HepG2 (cell line): ENCODE measurements at regions of chr2 and their contacts with region 1.

Region 1: DNA sequence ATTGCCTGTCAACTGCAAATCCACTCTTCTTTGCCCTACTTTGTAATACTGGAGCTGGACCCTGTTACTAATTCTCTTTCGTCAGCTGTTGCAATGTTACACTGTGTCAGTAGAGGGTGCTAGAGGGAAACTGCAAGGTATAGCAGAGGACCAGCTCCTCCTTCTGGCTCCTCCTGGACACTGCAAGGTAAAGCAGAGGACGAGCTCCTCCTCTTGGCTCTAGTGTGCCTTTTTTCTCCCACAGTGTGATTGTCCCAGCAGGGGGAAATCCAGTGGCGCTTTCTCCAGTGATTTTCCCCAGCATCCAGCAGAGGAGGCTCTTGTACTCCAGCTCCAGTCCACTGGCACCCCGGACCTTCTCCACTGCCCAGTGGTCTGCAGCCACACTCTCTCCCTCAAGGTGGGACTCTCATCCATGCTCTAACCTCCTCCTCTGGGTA is 95.6 kb downstream of the CAPN13 start:
- DNase-seq: peak; percentile 94
- ATAC-seq: peak; percentile 89
- H3K4me3 ChIP-seq: no peak overlapping the region
- H3K27ac ChIP-seq: no peak overlapping the region
- H3K4me1 ChIP-seq: no peaks in the 10 kb centered on the region
- H3K27me3 ChIP-seq: peaks cover 0 to 6% of the 10 kb centered on the region in 2 experiments; a peak in 1 of 5 replicates
- CTCF ChIP-seq: peak; percentile 99
- EP300 ChIP-seq: 0 out of 4 replicates have a peak, but pooled peaks of 1 of the 2 experiments have one; percentile 12
- POLR2A ChIP-seq: no peak
- RAD21 ChIP-seq: peak; percentile 94

Region 2: DNA sequence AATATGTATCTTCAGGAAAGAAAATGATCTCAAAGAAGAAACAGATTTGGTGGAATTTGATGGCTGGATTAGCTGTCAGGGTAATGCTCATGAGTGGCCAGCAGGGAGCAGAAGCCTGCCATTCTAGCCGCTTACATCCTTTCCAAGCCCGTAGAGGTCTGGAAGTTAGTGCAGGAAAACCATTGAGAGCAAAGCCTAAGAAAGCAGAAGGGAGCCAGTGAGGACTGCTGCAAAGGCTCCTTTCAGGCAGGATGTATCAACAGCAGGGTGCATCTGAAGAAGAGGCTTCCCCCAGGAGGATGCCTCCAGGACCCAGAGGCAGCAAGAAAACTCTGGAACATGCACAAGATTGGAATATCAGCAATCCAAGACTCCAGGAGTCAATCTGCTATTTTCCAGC is 503.2 kb before region 1 on chr2:
- CTCF ChIA-PET with region 1: interaction called, 86 read pairs
- POLR2A ChIA-PET with region 1: no interaction called
- in situ Hi-C with region 1: loop called (anchors 5 kb)
- intact Hi-C with region 1: loop called (anchors 1 kb)
- DNase-seq: peak; percentile 46
- ATAC-seq: peak; percentile 97
- H3K4me3 ChIP-seq: no peak overlapping the region
- H3K27ac ChIP-seq: no peak overlapping the region
- H3K4me1 ChIP-seq: no peaks in the 10 kb centered on the region
- H3K27me3 ChIP-seq: peaks cover 0 to 8% of the 10 kb centered on the region in 2 experiments; a peak in 2 of 5 replicates
- CTCF ChIP-seq: peak; percentile 91
- EP300 ChIP-seq: no peak
- POLR2A ChIP-seq: no peak
- RAD21 ChIP-seq: peak; percentile 82

Region 3: GRCh38 chr2:30561349-30561748 is 150.3 kb before region 1 on chr2:
- CTCF ChIA-PET with region 1: no interaction called
- POLR2A ChIA-PET with region 1: no interaction called
- in situ Hi-C with region 1: no loop called
- intact Hi-C with region 1: no loop called
- DNase-seq: peak; percentile 24
- ATAC-seq: peak; percentile 24; the same call in 1 of the 3 replicates
- H3K4me3 ChIP-seq: no peak overlapping the region
- H3K27ac ChIP-seq: no peak overlapping the region
- H3K4me1 ChIP-seq: no peaks in the 10 kb centered on the region
- H3K27me3 ChIP-seq: no peaks in the 10 kb centered on the region
- CTCF ChIP-seq: no peak
- EP300 ChIP-seq: no peak
- POLR2A ChIP-seq: no peak
- RAD21 ChIP-seq: no peak

Region 4: GRCh38 chr2:30584116-30584515 is 127.5 kb before region 1 on chr2:
- CTCF ChIA-PET with region 1: no interaction called
- POLR2A ChIA-PET with region 1: no interaction called
- in situ Hi-C with region 1: no loop called
- intact Hi-C with region 1: no loop called
- DNase-seq: no peak
- ATAC-seq: no peak
- H3K4me3 ChIP-seq: no peak overlapping the region
- H3K27ac ChIP-seq: no peak overlapping the region
- H3K4me1 ChIP-seq: no peaks in the 10 kb centered on the region
- H3K27me3 ChIP-seq: no peaks in the 10 kb centered on the region; a peak in 1 of 5 replicates
- CTCF ChIP-seq: no peak
- EP300 ChIP-seq: no peak
- POLR2A ChIP-seq: no peak
- RAD21 ChIP-seq: no peak

Region 5: GRCh38 chr2:30631051-30631671 is 80.5 kb before region 1 on chr2:
- CTCF ChIA-PET with region 1: no interaction called
- POLR2A ChIA-PET with region 1: no interaction called
- in situ Hi-C with region 1: no loop called
- intact Hi-C with region 1: no loop called
- DNase-seq: no peak
- ATAC-seq: no peak
- H3K4me3 ChIP-seq: no peak overlapping the region
- H3K27ac ChIP-seq: no peak overlapping the region
- H3K4me1 ChIP-seq: no peaks in the 10 kb centered on the region
- H3K27me3 ChIP-seq: no peaks in the 10 kb centered on the region
- CTCF ChIP-seq: no peak
- EP300 ChIP-seq: no peak
- POLR2A ChIP-seq: no peak
- RAD21 ChIP-seq: no peak

Region 6: DNA sequence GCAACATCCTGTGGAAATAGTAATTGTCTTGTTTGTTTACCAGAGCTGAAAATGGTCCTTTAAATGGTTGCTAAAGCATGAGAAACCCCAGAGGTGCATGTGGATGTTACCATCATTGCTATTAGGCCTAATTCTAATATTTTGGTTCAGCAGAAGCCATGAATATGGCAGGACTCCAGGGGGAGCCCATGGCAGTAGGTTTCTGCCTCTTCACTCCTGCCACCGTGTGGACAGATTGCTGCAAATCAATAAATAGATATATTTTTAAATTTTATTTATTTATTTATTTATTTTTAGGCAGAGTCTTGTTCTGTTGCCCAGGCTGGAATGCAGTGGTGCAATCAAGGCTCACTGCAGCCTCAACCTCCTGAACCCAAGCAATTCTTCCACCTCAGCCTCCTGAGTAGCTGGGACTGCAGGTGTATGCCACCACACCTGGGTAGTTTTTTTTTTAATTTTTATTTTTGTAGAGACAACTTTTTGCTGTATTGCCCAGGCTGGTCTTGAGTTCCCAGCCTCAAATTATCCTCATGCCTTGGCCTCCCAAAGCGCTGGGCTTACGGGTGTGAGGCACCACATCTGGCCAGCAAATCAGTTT is 150.5 kb after region 1 on chr2:
- CTCF ChIA-PET with region 1: interaction called, 34 read pairs
- POLR2A ChIA-PET with region 1: no interaction called
- in situ Hi-C with region 1: loop called (anchors 10 kb)
- intact Hi-C with region 1: loop called (anchors 2 kb)
- DNase-seq: peak; percentile 79
- ATAC-seq: peak; percentile 90
- H3K4me3 ChIP-seq: no peak overlapping the region
- H3K27ac ChIP-seq: no peak overlapping the region
- H3K4me1 ChIP-seq: no peaks in the 10 kb centered on the region
- H3K27me3 ChIP-seq: peaks cover 0 to 7% of the 10 kb centered on the region in 2 experiments; a peak in 1 of 5 replicates
- CTCF ChIP-seq: peak; percentile 62
- EP300 ChIP-seq: no peak
- POLR2A ChIP-seq: no peak
- RAD21 ChIP-seq: peak; percentile 72

Region 7: DNA sequence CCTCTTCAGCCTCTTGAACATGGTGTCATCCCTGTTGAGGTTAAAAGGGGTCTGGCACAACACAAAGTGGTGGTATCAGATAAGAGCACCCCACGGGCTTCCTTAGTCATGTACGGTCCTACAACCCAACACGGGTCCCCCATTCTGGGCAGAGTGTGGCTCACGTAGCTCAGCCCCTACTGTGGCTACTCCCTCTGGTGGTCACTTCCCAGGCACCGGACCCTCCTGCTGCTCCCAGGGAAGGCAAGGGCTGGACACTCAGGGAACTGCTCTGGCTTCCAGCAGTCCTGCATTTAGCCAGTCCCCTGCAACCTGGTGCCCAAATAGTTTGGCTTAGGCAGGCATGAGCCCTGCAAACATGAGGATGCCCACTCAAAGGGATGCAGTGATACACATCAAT is 368.0 kb after region 1 on chr2:
- CTCF ChIA-PET with region 1: no interaction called
- POLR2A ChIA-PET with region 1: no interaction called
- in situ Hi-C with region 1: no loop called
- intact Hi-C with region 1: loop called (anchors 1 kb)
- DNase-seq: peak; percentile 16
- ATAC-seq: peak; percentile 94
- H3K4me3 ChIP-seq: peak overlapping the region in 1 of 3 experiments; percentile 41; a peak in 1 of 6 replicates
- H3K27ac ChIP-seq: no peak overlapping the region
- H3K4me1 ChIP-seq: peaks cover 11% of the 10 kb centered on the region
- H3K27me3 ChIP-seq: 0 out of 5 replicates have a peak, but pooled peaks cover 0 to 7% of the 10 kb centered on the region in 2 experiments
- CTCF ChIP-seq: peak; percentile 62
- EP300 ChIP-seq: no peak
- POLR2A ChIP-seq: no peak
- RAD21 ChIP-seq: no peak

Region 8: GRCh38 chr2:31333527-31334183 is 622.0 kb after region 1 on chr2:
- CTCF ChIA-PET with region 1: interaction called, 45 read pairs
- POLR2A ChIA-PET with region 1: no interaction called
- in situ Hi-C with region 1: loop called (anchors 5 kb)
- intact Hi-C with region 1: no loop called
- DNase-seq: peak; percentile 66
- ATAC-seq: peak; percentile 93
- H3K4me3 ChIP-seq: no peak overlapping the region
- H3K27ac ChIP-seq: no peak overlapping the region
- H3K4me1 ChIP-seq: no peaks in the 10 kb centered on the region
- H3K27me3 ChIP-seq: peaks cover 1 to 8% of the 10 kb centered on the region in 2 experiments; a peak in 4 of 5 replicates
- CTCF ChIP-seq: peak; percentile 95
- EP300 ChIP-seq: no peak
- POLR2A ChIP-seq: no peak
- RAD21 ChIP-seq: peak; percentile 86